ENCODE measurements at regions of chr7 and their contacts with region 1.

Region 1: DNA sequence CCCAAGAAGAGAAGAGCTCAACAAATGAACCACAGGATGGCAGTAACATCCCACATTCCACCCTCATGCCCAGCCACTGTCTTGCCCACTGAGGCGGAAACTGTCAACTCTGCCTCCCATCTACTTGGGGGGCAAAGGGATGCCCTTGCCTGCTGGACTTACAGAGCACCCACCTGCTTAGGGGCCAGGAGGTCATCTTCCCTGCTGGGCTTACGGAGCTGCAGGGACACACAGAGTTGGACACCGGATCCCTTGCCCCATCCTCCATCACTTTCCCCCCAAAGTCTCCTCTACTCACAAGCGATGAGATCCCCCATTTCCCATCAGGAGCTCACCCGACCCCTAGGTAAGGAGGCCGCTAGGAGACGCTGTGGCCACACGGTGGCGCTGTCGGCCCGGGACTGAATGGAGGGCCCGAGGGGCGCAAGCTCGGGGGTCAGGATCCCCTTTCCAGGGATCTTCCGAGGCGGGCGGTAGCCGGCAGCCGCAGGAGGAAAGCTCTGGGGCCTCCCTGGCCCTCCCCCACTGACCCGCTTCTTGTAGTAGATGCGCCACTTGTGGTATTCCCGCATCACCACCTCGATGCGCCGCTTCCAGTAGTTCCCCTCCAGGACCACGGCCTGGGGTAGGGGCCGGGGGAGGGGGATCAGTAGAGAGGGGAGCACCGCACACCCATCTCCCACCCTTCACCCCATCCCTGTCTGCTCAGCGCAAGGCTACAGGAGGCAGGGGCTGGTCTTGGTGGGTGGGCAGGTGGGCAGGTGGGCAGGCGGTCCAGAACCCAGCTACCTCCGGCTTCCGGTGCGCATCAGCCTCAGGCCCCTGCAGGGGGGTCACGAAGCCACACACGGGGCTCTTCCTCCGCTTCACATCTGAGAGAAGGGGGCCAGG is 17.3 kb downstream of the MLXIPL start:
- DNase-seq: peak; percentile 51
- H3K4me3 Mint-ChIP-seq: no peak overlapping the region
- H3K27ac Mint-ChIP-seq: no peak overlapping the region
- H3K4me1 Mint-ChIP-seq: peaks cover 6% of the 10 kb centered on the region
- H3K27me3 Mint-ChIP-seq: no peaks in the 10 kb centered on the region
- CTCF ChIP-seq: peak; percentile 95

Region 2: DNA sequence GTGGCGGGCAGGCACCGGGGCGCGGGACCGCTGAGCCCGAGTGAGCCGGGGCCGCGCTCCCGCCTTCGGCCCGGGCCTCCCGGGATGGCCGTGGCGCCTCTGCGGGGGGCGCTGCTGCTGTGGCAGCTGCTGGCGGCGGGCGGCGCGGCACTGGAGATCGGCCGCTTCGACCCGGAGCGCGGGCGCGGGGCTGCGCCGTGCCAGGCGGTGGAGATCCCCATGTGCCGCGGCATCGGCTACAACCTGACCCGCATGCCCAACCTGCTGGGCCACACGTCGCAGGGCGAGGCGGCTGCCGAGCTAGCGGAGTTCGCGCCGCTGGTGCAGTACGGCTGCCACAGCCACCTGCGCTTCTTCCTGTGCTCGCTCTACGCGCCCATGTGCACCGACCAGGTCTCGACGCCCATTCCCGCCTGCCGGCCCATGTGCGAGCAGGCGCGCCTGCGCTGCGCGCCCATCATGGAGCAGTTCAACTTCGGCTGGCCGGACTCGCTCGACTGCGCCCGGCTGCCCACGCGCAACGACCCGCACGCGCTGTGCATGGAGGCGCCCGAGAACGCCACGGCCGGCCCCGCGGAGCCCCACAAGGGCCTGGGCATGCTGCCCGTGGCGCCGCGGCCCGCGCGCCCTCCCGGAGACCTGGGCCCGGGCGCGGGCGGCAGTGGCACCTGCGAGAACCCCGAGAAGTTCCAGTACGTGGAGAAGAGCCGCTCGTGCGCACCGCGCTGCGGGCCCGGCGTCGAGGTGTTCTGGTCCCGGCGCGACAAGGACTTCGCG is 172.9 kb before region 1 on chr7:
- CTCF ChIA-PET with region 1: no interaction called
- POLR2A ChIA-PET with region 1: no interaction called
- intact Hi-C with region 1: no loop called
- DNase-seq: no peak
- H3K4me3 Mint-ChIP-seq: peak overlapping the region; percentile 39
- H3K27ac Mint-ChIP-seq: no peak overlapping the region
- H3K4me1 Mint-ChIP-seq: no peaks in the 10 kb centered on the region
- H3K27me3 Mint-ChIP-seq: no peaks in the 10 kb centered on the region
- CTCF ChIP-seq: no peak

Region 3: DNA sequence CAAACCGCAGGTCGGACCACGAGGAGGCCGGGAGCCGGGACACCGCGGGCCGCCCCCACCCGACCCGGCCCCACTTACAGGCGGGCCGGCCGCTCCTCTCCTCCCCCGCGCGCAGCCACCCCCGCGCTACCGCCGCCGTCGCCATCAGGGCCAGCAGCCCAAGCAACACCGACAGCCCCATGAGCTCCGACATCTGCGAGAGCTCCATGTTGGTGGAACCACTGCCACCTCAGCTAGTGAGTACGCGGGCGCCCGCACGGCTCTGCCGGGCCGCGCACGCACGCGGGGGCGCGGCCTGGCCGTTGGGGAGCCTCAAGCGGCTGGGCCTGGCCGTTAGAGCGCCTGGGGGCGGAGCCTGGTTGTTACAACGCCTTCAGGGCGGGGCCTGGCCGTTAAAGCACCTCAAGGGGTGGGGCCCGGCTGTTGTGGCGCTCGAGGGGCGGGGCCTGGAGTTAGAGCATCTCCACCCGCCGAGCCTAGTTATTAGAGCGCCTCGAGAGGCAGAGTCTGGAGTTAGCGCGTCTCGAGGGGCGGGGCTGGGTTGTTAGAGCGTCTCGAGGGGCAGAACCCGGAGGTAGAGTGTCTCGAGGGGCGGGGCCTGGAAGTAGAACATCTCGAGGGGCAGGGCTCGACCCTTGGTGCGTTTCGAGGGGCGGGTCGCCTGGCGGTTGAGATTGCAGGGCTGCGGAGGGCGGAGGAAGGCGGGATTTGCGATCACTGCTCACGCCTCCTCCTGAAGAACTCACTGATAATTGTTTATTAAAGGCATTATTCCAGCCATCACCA is 28.5 kb before region 1 on chr7 and contains the start of gene TBL2:
- CTCF ChIA-PET with region 1: interaction called, 10 read pairs
- POLR2A ChIA-PET with region 1: interaction called, 5 read pairs
- intact Hi-C with region 1: no loop called
- DNase-seq: peak; percentile 98
- H3K4me3 Mint-ChIP-seq: peak within 1 kb of the TSS; percentile 87
- H3K27ac Mint-ChIP-seq: peak within 1 kb of the TSS; percentile 93
- H3K4me1 Mint-ChIP-seq: peaks cover 5% of the 10 kb centered on the region
- H3K27me3 Mint-ChIP-seq: no peaks in the 10 kb centered on the region
- CTCF ChIP-seq: no peak
- total RNA-seq, gene TBL2: 44.0 and 47.0 TPM in 2 replicates

Region 4: DNA sequence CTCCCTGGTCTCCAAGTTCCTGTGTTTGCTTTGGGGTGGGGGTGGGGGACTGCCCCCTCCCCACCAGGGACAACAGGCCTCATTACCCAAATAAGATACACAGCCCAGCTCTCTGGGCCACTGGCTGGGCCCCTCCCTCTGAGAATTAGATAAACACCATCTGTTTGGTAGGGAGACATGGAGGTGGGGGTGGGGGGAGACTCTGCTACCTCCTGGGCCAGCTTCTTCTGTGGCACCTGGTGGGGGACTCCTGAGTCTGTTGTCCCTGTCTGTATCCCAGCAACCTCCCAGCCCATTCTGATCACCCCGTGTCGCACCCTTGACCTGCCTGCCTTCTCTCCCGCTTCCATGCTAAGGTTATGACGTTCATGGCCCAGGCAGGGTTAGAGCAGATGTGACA is 11.5 kb after region 1 on chr7:
- CTCF ChIA-PET with region 1: interaction called, 42 read pairs
- POLR2A ChIA-PET with region 1: no interaction called
- intact Hi-C with region 1: no loop called
- DNase-seq: no peak
- H3K4me3 Mint-ChIP-seq: no peak overlapping the region
- H3K27ac Mint-ChIP-seq: no peak overlapping the region
- H3K4me1 Mint-ChIP-seq: peaks cover 9% of the 10 kb centered on the region
- H3K27me3 Mint-ChIP-seq: no peaks in the 10 kb centered on the region
- CTCF ChIP-seq: no peak

Region 5: DNA sequence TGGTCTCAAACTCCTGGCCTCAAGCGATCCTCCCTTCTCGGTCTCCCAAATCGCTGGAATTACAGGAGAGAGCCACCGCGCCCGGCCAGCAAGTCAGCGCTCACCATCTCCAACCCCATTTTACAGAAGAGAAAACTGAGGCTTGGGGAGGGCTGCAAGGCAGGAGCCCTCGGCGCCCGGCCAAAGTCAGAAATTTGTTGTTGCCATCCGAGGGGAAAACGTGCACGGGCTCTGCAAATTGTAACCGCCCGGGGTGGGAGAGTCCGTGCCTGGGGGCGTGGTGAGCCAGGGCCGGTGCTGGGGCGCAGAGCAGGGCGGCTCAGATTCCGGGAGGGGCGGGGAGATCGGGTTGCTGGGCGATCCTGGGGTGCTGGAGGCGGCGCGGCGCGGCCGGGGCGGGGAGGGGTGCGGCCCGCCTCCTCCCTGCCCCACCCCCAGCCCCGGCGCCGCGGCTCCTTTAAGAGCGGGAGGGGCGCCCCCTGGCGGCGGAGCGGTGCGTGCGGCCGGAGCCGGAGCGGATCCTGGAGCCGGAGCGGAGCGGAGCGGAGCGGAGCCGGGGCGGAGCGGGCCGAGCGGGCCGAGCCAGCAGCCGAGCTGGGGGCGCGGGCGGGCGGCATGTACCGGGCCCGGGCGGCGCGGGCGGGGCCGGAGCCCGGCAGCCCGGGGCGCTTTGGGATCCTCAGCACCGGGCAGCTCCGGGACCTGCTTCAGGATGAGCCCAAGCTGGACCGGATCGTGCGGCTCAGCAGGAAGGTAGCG is 60.5 kb after region 1 on chr7 and contains the start of gene VPS37D:
- CTCF ChIA-PET with region 1: interaction called, 14 read pairs
- POLR2A ChIA-PET with region 1: no interaction called
- intact Hi-C with region 1: loop called (anchors 2 kb)
- DNase-seq: peak; percentile 88
- H3K4me3 Mint-ChIP-seq: peak within 1 kb of the TSS; percentile 67
- H3K27ac Mint-ChIP-seq: no peak within 1 kb of the TSS
- H3K4me1 Mint-ChIP-seq: peaks cover 15% of the 10 kb centered on the region
- H3K27me3 Mint-ChIP-seq: no peaks in the 10 kb centered on the region
- CTCF ChIP-seq: peak; percentile 95
- total RNA-seq, gene VPS37D: 0.44 and 1.3 TPM in 2 replicates

Region 6: DNA sequence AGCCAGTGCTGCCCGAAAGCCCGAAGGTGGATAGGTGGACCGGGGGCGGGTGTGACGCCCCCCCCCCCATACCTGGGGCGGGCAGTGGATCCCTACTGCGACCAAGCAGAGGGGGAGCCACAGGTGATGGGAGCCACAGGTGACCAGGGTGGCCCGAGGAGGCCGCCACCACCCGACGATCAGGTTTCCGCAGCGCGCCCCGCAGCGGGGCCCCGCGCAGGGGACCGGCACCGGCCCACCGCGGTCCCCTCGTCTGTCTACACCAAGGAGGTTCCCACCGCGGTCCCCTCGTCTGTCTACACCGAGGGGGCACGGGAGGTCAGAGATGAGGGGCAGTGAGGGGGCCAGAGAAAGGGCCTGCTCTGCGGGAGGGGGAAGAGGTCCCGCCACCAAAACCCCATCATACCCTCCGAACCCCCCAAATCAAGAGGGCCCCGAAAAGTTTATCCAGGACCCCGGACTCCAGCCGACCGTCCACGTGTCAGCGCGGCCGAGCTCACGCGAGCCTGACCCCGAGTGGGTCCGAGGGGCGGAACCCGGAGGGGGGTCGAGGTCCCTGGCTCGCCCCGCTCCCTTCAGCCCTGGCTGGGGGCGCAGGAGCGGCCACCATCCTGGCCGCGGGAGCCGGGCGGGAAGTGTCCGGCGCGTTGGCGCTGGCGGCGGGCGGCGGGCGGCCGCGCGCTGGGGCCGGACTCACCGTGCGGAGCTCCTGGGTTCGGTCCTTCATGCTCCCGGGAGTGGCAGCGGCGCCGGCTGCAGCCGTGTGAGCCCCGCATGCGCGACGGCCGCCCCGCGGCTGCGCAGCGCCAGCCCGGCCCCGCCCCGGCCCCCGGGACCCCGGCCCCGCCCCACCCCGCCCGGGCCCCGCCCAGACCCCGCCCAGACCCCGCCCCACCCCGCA is 112.1 kb after region 1 on chr7 and contains the start of gene STX1A:
- CTCF ChIA-PET with region 1: interaction called, 65 read pairs
- POLR2A ChIA-PET with region 1: interaction called, 4 read pairs
- intact Hi-C with region 1: no loop called
- DNase-seq: peak; percentile 73
- H3K4me3 Mint-ChIP-seq: peak within 1 kb of the TSS; percentile 71
- H3K27ac Mint-ChIP-seq: no peak within 1 kb of the TSS
- H3K4me1 Mint-ChIP-seq: peaks cover 34% of the 10 kb centered on the region
- H3K27me3 Mint-ChIP-seq: no peaks in the 10 kb centered on the region
- CTCF ChIP-seq: no peak
- total RNA-seq, gene STX1A: 21.9 and 24.2 TPM in 2 replicates

Region 7: DNA sequence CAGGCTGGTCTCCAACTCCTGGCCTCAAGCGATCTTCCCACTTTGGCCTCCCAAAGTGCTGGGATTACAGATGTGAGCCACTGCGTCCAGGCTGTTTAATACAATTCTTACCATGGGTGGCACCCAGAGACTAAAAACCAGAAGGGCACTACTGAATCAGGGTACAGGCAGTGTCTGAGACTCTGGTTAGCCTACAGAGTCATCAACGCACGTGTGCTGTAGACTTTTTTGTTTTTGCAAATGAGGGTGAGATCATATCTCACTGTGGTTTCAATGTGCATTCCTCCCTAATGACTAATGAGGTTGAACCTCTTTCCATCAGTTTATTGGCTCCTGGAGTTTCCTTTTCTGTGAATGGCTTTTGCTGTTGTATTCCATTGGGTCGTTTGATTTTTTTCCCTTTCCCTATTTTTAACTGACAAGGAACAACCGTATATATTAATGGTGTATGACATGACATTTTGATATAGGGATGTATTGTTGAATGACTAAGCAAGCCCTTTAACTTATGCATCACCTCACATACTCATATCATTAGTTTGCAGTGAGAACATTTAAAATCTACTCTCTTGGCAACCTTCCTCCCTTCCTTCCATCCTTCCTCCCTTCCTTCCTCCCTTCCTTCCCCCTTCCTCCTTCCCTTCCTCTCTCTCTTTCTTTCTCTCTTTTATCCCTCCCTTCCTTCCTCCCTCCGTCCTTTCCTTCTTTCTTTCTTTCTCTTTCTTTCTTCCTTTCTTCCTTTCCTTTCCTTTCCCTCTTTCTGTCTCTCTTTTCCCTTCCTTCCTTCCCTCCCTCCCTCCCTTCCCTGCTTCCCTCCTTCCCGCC is 244.6 kb after region 1 on chr7:
- CTCF ChIA-PET with region 1: interaction called, 10 read pairs
- POLR2A ChIA-PET with region 1: no interaction called
- intact Hi-C with region 1: loop called (anchors 5 kb)
- DNase-seq: peak; percentile 97
- H3K4me3 Mint-ChIP-seq: peak overlapping the region; percentile 43
- H3K27ac Mint-ChIP-seq: peak overlapping the region; percentile 94
- H3K4me1 Mint-ChIP-seq: peaks cover 39% of the 10 kb centered on the region
- H3K27me3 Mint-ChIP-seq: no peaks in the 10 kb centered on the region
- CTCF ChIP-seq: no peak

Measured in MCF 10A (cell line).